Thyroid gland (tissue), 4 donors: ENCODE measurements at regions of chr4 and their contacts with region 1.

Region 1: DNA sequence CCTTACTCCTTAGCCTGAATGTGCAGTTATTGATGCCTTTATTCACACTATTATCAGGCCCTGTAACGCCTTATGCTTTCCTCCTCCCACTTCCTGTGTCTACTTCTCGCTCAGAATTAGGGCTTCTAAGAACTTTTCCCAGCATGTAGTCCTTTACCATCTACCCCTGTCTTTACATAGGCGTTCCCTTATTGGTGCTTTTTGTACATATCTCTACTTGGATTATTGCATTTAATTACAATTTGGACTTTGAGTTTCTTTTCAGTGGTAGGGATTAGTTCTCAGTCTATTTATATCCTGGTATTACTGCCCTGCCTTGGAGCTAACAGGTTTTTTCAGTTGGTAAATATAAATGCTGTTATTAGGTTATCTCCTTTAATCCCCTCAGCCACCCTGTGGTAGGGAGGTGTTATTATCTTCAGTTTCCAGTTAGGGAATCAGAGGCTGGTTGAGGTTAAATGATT is 84.0 kb downstream of the RBPJ start:
- DNase-seq: no peak
- H3K4me3 ChIP-seq: no peak overlapping the region
- H3K27ac ChIP-seq: no peak overlapping the region
- H3K4me1 ChIP-seq: no peaks in the 10 kb centered on the region
- H3K27me3 ChIP-seq: no peaks in the 10 kb centered on the region
- CTCF ChIP-seq: no peak
- POLR2A ChIP-seq: no peak

Region 2: GRCh38 chr4:26032630-26033317 is 372.0 kb before region 1 on chr4:
- intact Hi-C with region 1: no loop called
- DNase-seq: peak; percentile 36 to 37
- H3K4me3 ChIP-seq: no peak overlapping the region
- H3K27ac ChIP-seq: peak overlapping the region in 2 of 3 donors; percentile 41 to 49
- H3K4me1 ChIP-seq: peaks cover 14 to 20% of the 10 kb centered on the region in 2 donors
- H3K27me3 ChIP-seq: no peaks in the 10 kb centered on the region
- CTCF ChIP-seq: no peak
- POLR2A ChIP-seq: no peak

Region 3: DNA sequence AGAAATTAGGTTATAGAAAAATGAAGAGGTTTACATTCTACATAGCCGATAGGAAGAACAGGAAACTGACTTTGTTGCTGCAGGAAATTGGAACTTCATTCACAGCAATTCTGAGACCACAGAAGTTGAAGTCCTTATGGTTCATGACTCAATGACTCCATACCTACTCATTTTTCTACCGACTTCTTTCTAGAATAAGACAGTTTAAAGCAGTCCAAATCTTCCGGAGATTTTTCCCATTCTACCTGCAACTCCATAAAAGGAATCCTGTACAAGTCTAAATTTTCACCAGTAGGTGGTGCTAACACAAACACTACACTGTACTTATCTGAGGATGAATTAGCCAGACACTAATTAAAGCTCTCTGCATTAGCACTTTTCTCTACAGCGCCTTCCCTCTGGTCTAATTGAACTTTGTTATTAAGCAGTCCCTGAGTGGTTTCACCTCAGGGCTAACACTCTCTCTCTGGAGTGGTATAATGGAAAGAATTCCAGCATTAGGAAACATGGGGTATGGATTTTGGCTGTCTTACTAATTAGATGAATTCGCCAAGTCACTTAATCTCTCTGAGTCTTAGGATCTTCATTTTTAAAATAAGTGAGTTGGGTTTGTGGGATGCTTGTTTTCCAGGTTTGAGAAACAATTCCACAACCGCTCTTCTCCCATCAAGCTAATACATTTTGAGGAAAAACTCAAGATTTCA is 322.8 kb before region 1 on chr4:
- intact Hi-C with region 1: loop called (anchors 10 kb)
- DNase-seq: no peak
- H3K4me3 ChIP-seq: no peak overlapping the region
- H3K27ac ChIP-seq: no peak overlapping the region
- H3K4me1 ChIP-seq: peaks cover 10 to 13% of the 10 kb centered on the region in 2 donors
- H3K27me3 ChIP-seq: no peaks in the 10 kb centered on the region
- CTCF ChIP-seq: peak; percentile 44 to 69 (median 61)
- POLR2A ChIP-seq: no peak

Region 4: DNA sequence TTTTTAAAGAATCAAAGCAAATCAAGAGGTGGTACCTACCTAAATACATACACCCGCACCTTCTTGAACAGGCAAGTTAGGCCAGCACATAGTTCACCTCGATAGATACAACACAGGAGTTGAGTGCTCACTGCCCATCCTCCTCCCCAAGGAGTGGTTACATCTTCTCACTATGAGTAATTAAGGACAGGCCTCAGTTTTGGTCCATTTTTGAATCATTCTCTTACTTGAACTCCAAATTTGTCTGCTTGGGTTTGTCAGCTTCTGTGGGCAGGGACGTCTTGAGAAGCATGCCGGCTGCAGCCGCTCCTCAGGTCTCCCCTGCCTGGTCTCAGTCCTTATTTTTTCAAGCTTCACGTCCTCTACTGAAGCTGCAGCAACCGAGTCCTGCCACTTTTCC is 274.6 kb before region 1 on chr4:
- intact Hi-C with region 1: no loop called
- DNase-seq: no peak
- H3K4me3 ChIP-seq: no peak overlapping the region
- H3K27ac ChIP-seq: no peak overlapping the region
- H3K4me1 ChIP-seq: no peaks in the 10 kb centered on the region
- H3K27me3 ChIP-seq: no peaks in the 10 kb centered on the region
- CTCF ChIP-seq: no peak
- POLR2A ChIP-seq: no peak